GM12878 (cell line): ENCODE measurements at regions of chr12 and their contacts with region 1.

Region 1: GRCh38 chr12:103571286-103571685 is 15.8 kb upstream of the STAB2 start:
- DNase-seq: no peak
- ATAC-seq: no peak
- H3K4me3 ChIP-seq: no peak overlapping the region
- H3K27ac ChIP-seq: no peak overlapping the region
- H3K4me1 ChIP-seq: peaks cover 5% of the 10 kb centered on the region
- H3K27me3 ChIP-seq: no peaks in the 10 kb centered on the region; a peak in 1 of 4 replicates
- CTCF ChIP-seq: no peak
- EP300 ChIP-seq: no peak
- POLR2A ChIP-seq: no peak
- RAD21 ChIP-seq: no peak

Region 2: GRCh38 chr12:103840876-103841689 is 269.8 kb after region 1 on chr12 and contains the start of gene NT5DC3:
- CTCF ChIA-PET with region 1: no interaction called
- POLR2A ChIA-PET with region 1: no interaction called
- RAD21 ChIA-PET with region 1: no interaction called
- SMC1A ChIA-PET with region 1: no interaction called
- in situ Hi-C with region 1: no loop called
- intact Hi-C with region 1: loop called (anchors 10 kb)
- DNase-seq: peak; percentile 37
- ATAC-seq: peak; percentile 90
- H3K4me3 ChIP-seq: peak within 1 kb of the TSS; percentile 95
- H3K27ac ChIP-seq: no peak within 1 kb of the TSS; the same call in none of the 2 replicates
- H3K4me1 ChIP-seq: peaks cover 8% of the 10 kb centered on the region
- H3K27me3 ChIP-seq: no peaks in the 10 kb centered on the region
- CTCF ChIP-seq: 0 out of 6 replicates have a peak, but pooled peaks of 1 of the 3 experiments have one; percentile 3
- EP300 ChIP-seq: no peak
- POLR2A ChIP-seq: peak; percentile 92
- RAD21 ChIP-seq: no peak
- polyA plus RNA-seq, gene NT5DC3: 2.0 to 12.4 TPM